K562 (cell line): ENCODE measurements at regions of chr10 and their contacts with region 1.

Region 1: GRCh38 chr10:5466418-5467154 is 32.8 kb downstream of the CALML5 start:
- DNase-seq: peak; percentile 62 to 76 (median 72)
- ATAC-seq: peak; percentile 77
- H3K4me3 ChIP-seq: no peak overlapping the region
- H3K27ac ChIP-seq: peak overlapping the region; percentile 63
- H3K4me1 ChIP-seq: peaks cover 54 to 66% of the 10 kb centered on the region in 2 experiments
- H3K27me3 ChIP-seq: no peaks in the 10 kb centered on the region
- CTCF ChIP-seq: no peak
- EP300 ChIP-seq: no peak
- POLR2A ChIP-seq: no peak; the same call in 1 of the 2 replicates
- RAD21 ChIP-seq: no peak

Region 2: GRCh38 chr10:5446390-5446926 is 20.1 kb before region 1 on chr10:
- CTCF ChIA-PET with region 1: no interaction called
- POLR2A ChIA-PET with region 1: interaction called, 30 read pairs
- in situ Hi-C with region 1: no loop called
- intact Hi-C with region 1: no loop called
- DNase-seq: peak; percentile 97 to 98 (median 97)
- ATAC-seq: peak; percentile 87
- H3K4me3 ChIP-seq: peak overlapping the region; percentile 56
- H3K27ac ChIP-seq: peak overlapping the region; percentile 74
- H3K4me1 ChIP-seq: peaks cover 4 to 23% of the 10 kb centered on the region in 2 experiments
- H3K27me3 ChIP-seq: no peaks in the 10 kb centered on the region
- CTCF ChIP-seq: no peak
- EP300 ChIP-seq: no peak
- POLR2A ChIP-seq: peak; percentile 98
- RAD21 ChIP-seq: peak; percentile 29 to 31; a peak in 3 of 4 replicates

Region 3: DNA sequence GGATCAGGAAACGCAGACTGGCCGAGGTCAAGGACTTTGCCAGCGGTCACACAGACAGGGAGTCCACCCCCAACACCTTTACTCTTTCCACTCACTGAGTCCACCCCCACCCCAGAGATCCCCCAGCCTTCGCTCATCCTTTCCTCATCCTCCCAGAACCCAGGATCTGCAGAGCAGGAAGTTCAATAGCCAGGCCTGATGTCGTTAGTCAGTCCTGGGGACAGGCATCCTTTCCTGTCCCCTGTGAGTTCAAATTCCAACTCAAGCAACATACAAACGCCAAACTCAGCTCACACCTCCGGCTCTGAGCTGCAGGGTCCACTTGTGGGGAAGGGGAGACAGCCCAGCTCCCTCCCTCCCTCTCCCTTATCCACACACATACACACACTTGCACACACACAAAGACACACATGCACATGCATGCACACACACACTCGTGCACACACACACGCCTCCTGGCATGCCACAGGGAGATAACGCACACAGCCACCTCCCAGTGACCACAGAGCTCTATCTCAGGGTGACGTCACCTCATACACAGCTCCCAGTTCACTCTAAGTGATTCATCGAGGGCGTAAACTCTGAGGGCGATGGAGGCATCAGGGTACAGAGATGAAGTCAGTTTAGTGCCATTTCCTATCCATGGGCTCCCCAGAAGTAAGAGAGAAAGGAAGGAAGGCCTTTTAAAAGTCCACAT is 82.1 kb after region 1 on chr10:
- CTCF ChIA-PET with region 1: no interaction called
- POLR2A ChIA-PET with region 1: interaction called, 10 read pairs
- in situ Hi-C with region 1: no loop called
- intact Hi-C with region 1: no loop called
- DNase-seq: peak; percentile 92 to 95 (median 93)
- ATAC-seq: peak; percentile 91
- H3K4me3 ChIP-seq: no peak overlapping the region
- H3K27ac ChIP-seq: peak overlapping the region; percentile 68
- H3K4me1 ChIP-seq: peaks cover 60 to 77% of the 10 kb centered on the region in 2 experiments
- H3K27me3 ChIP-seq: no peaks in the 10 kb centered on the region
- CTCF ChIP-seq: no peak
- EP300 ChIP-seq: peak; percentile 83
- POLR2A ChIP-seq: no peak
- RAD21 ChIP-seq: peak in 1 of 2 experiments; percentile 14; a peak in 2 of 4 replicates

Region 4: DNA sequence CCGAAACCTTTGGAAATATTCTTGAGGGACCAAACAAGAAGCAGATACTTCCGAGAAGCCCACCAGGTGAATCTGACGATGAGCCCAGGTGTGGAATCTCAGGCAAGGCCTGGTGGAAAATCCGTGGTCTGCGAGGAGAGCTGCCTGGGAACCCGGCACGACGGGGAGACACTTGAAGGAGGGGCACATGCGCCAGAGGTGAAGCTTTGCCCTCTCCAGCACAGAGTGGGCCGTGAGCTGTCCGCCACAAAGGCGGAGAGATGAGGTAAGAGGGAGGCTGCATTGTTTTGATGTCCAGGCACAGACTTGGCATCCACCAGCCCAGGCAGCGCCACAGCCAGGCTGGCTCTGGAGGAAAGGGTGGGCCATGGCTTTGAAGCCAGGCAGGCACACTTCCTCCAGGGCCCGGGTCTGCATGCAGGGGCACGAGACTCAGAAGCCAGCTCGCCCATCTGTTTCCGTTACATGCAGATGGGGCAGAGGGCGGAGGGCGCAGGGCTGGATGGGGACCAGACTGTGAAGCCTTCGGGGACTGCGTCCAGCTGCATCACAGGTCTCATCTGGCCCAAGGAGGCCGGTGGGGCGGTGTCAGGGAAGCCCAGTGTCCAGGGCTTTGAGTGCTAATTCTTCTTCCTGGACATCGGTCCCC is 103.5 kb after region 1 on chr10:
- CTCF ChIA-PET with region 1: no interaction called
- POLR2A ChIA-PET with region 1: no interaction called
- in situ Hi-C with region 1: no loop called
- intact Hi-C with region 1: no loop called
- DNase-seq: no peak
- ATAC-seq: no peak
- H3K4me3 ChIP-seq: no peak overlapping the region
- H3K27ac ChIP-seq: no peak overlapping the region
- H3K4me1 ChIP-seq: peaks cover 4 to 21% of the 10 kb centered on the region in 2 experiments; a peak in 3 of 5 replicates
- H3K27me3 ChIP-seq: no peaks in the 10 kb centered on the region
- CTCF ChIP-seq: no peak
- EP300 ChIP-seq: no peak
- POLR2A ChIP-seq: no peak
- RAD21 ChIP-seq: no peak